ENCODE measurements at regions of chr3 and their contacts with region 1.

Region 1: GRCh38 chr3:136861890-136862616 is at the start of gene NCK1:
- DNase-seq: peak; percentile 99
- ATAC-seq: peak; percentile 98
- H3K4me3 Mint-ChIP-seq: peak within 1 kb of the TSS; percentile 97
- H3K27ac Mint-ChIP-seq: peak within 1 kb of the TSS; percentile 92
- H3K4me1 Mint-ChIP-seq: peaks cover 42% of the 10 kb centered on the region
- H3K27me3 Mint-ChIP-seq: no peaks in the 10 kb centered on the region
- CTCF ChIP-seq: peak; percentile 13
- total RNA-seq, gene NCK1: 31.9 to 34.7 TPM

Region 2: DNA sequence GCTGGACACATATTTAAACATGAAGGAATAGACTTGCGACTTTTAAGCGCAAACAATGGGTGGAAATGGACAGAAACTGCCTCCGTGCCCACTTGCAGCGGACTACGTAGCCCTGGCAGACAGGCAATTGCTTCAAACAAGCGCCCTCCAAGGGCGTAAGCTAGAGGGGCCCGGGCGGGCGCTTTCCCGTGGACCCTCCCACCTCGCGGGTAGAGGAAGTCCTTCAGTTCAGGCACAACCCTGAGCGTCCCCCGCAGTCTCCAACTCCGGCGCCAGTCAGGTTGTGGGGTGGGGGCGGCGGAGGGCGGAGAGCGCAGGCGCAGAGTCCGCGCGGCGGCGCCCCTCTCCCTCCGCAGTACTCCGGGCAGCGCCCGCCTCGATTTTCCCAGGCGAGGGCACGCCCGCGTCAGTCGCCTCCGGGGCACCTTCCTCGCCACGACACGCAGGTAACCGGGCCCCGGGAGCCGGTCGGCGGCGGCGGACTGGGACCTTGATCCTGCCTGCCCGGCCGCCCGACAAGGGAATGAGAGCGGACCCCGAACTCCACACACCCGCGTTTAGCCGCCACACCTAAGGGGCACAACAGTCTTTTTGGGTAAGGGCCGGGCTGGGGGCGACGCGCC is 43.2 kb before region 1 on chr3 and contains the start of gene SLC35G2:
- CTCF ChIA-PET with region 1: interaction called, 4 read pairs
- POLR2A ChIA-PET with region 1: no interaction called
- intact Hi-C with region 1: loop called (anchors 10 kb)
- DNase-seq: peak; percentile 69
- ATAC-seq: peak; percentile 52
- H3K4me3 Mint-ChIP-seq: peak within 1 kb of the TSS; percentile 81
- H3K27ac Mint-ChIP-seq: peak within 1 kb of the TSS; percentile 82
- H3K4me1 Mint-ChIP-seq: peaks cover 24% of the 10 kb centered on the region
- H3K27me3 Mint-ChIP-seq: peaks cover 27% of the 10 kb centered on the region
- CTCF ChIP-seq: no peak
- total RNA-seq, gene SLC35G2: 3.0 TPM

Region 3: GRCh38 chr3:136929984-136930670 is 68.1 kb after region 1 on chr3:
- CTCF ChIA-PET with region 1: no interaction called
- POLR2A ChIA-PET with region 1: interaction called, 3 read pairs
- intact Hi-C with region 1: loop called (anchors 10 kb)
- DNase-seq: no peak
- ATAC-seq: no peak
- H3K4me3 Mint-ChIP-seq: no peak overlapping the region
- H3K27ac Mint-ChIP-seq: no peak overlapping the region
- H3K4me1 Mint-ChIP-seq: peaks cover 60% of the 10 kb centered on the region
- H3K27me3 Mint-ChIP-seq: no peaks in the 10 kb centered on the region
- CTCF ChIP-seq: no peak

Region 4: DNA sequence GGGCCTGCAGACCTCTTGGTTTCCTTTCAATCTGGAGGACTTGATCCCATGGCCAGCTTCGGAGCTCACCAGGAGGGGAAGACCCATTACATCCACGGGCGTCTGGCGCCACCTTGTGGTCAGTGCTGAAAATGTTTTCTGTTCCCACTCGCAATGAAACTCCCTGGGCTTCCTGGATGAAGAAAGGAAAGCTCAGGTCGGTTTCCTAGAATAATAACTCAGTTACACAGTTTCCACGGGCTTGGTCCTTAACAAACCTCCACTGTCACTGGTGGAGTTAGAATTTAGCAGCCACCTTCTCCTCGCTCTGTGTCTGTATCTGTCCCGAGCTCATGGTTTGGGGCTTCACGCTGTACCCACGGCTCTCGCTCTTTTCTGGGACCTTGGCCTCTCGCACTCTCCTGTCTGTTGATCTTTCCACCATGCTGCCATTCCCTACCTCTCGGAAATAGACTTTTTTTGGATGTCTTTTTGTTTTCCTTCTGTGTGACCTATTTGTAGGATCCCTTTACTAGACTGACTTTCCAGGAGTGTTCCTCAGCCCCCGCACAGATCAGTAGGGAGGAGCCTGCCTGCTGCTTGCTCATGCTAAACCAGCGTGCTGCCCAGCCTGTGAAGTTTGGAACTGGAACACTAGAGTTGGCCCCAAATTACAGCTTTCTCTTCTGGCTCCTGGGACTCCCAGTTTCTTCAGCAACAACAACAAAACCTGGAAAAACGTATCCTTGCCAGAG is 152.1 kb after region 1 on chr3:
- CTCF ChIA-PET with region 1: interaction called, 28 read pairs
- POLR2A ChIA-PET with region 1: interaction called, 4 read pairs
- intact Hi-C with region 1: no loop called
- DNase-seq: peak; percentile 85
- ATAC-seq: peak; percentile 88
- H3K4me3 Mint-ChIP-seq: peak overlapping the region; percentile 63
- H3K27ac Mint-ChIP-seq: peak overlapping the region; percentile 70
- H3K4me1 Mint-ChIP-seq: peaks cover 8% of the 10 kb centered on the region
- H3K27me3 Mint-ChIP-seq: no peaks in the 10 kb centered on the region
- CTCF ChIP-seq: peak; percentile 85

Region 5: GRCh38 chr3:137148917-137149316 is 286.9 kb after region 1 on chr3:
- CTCF ChIA-PET with region 1: no interaction called
- POLR2A ChIA-PET with region 1: no interaction called
- intact Hi-C with region 1: no loop called
- DNase-seq: no peak
- ATAC-seq: no peak
- H3K4me3 Mint-ChIP-seq: no peak overlapping the region
- H3K27ac Mint-ChIP-seq: no peak overlapping the region
- H3K4me1 Mint-ChIP-seq: no peaks in the 10 kb centered on the region
- H3K27me3 Mint-ChIP-seq: peaks cover 5% of the 10 kb centered on the region
- CTCF ChIP-seq: no peak